HCT116 (cell line): ENCODE measurements at regions of chr4 and their contacts with region 1.

Region 1: GRCh38 chr4:1266881-1267763 is 18.2 kb upstream of the CTBP1 start:
- DNase-seq: no peak
- ATAC-seq: no peak
- H3K4me3 ChIP-seq: no peak overlapping the region
- H3K27ac ChIP-seq: no peak overlapping the region
- H3K4me1 ChIP-seq: no peaks in the 10 kb centered on the region
- H3K27me3 ChIP-seq: no peaks in the 10 kb centered on the region
- CTCF ChIP-seq: no peak
- POLR2A ChIP-seq: no peak
- RAD21 ChIP-seq: no peak

Region 2: DNA sequence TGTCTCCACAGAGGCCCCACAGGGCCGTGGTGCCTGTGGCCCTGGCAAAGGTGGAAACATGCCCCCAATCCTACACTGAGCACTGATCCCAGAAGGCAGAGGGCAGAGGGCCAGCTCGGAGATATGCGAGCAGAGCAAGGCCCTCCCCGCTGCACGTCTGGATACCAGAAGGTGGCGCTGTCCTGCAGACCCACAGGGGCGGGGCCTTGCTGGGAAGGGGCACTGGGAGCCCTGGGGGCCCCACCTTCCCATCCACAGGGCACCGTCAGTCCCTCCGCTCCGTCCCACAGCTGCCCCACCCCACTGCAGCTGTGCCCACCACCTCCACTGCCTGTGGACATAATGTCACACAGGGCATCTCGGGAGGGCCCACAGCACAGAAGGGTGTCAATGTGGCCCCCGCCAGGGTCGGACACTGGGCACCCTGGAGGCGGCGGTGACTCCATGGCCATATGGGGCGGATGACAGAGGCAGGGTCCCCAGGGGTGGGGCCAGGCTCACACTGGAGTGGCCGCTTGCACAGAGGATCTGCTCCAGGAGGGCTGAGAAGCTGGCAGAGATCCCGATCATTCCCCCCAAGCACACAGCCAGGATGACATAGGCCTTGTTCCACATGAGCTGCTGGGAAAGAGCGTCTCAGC is 583.0 kb before region 1 on chr4:
- CTCF ChIA-PET with region 1: no interaction called
- POLR2A ChIA-PET with region 1: no interaction called
- RAD21 ChIA-PET with region 1: no interaction called
- intact Hi-C with region 1: no loop called
- DNase-seq: peak; percentile 51
- ATAC-seq: peak; percentile 45
- H3K4me3 ChIP-seq: no peak overlapping the region
- H3K27ac ChIP-seq: peak overlapping the region; percentile 27; the same call in 1 of the 2 replicates
- H3K4me1 ChIP-seq: peaks cover 24 to 47% of the 10 kb centered on the region in 2 experiments
- H3K27me3 ChIP-seq: no peaks in the 10 kb centered on the region
- CTCF ChIP-seq: peak in 2 of 3 experiments; percentile 85 to 94; a peak in 4 of 6 replicates
- POLR2A ChIP-seq: no peak
- RAD21 ChIP-seq: no peak

Region 3: DNA sequence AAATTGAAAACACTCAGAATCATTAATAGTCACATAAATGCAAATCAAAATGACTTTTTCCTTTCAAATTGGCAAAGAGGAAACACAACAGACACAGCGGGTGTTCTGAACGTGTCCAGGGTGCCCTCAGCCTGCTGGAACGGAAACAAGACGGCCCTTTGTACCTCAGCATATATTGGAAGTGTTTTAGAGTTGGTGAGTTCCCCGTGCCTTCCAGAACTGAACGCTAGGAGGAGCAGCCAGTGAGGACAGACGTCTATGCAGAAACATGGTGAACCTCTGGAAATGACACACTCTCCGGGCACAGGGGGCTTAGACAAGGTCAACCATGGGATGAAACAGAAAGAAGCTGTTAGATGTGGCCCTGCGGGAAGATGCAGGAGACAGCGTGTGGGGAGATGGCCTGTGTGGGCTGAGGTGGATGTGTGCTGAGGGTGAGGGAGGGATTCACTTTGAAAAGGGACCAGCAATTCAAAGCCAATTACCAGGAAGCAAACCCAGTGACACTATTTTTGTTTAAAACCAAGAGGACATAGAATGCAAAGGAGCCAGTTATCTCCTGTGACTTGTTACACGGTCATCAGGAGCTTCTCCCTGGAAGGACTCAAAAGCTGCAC is 194.2 kb before region 1 on chr4:
- CTCF ChIA-PET with region 1: no interaction called
- POLR2A ChIA-PET with region 1: no interaction called
- RAD21 ChIA-PET with region 1: no interaction called
- intact Hi-C with region 1: loop called (anchors 2 kb)
- DNase-seq: peak; percentile 71
- ATAC-seq: peak; percentile 99
- H3K4me3 ChIP-seq: no peak overlapping the region
- H3K27ac ChIP-seq: no peak overlapping the region
- H3K4me1 ChIP-seq: peaks cover 3 to 11% of the 10 kb centered on the region in 2 experiments; a peak in 3 of 4 replicates
- H3K27me3 ChIP-seq: no peaks in the 10 kb centered on the region
- CTCF ChIP-seq: peak; percentile 60 to 85 (median 73); a peak in 5 of 6 replicates
- POLR2A ChIP-seq: no peak
- RAD21 ChIP-seq: peak; percentile 60

Region 4: GRCh38 chr4:1130316-1131186 is 136.6 kb before region 1 on chr4:
- CTCF ChIA-PET with region 1: interaction called, 5 read pairs
- POLR2A ChIA-PET with region 1: no interaction called
- RAD21 ChIA-PET with region 1: interaction called in 1 of 2 experiments, 3 read pairs
- intact Hi-C with region 1: loop called (anchors 1 kb)
- DNase-seq: peak; percentile 57
- ATAC-seq: peak; percentile 99
- H3K4me3 ChIP-seq: no peak overlapping the region
- H3K27ac ChIP-seq: no peak overlapping the region
- H3K4me1 ChIP-seq: peaks cover 0 to 6% of the 10 kb centered on the region in 2 experiments; a peak in 2 of 4 replicates
- H3K27me3 ChIP-seq: peaks cover 5% of the 10 kb centered on the region; the same call in 1 of the 2 replicates
- CTCF ChIP-seq: peak; percentile 94 to 99 (median 99)
- POLR2A ChIP-seq: no peak
- RAD21 ChIP-seq: peak; percentile 96